Activated T-helper 1 cell treated with anti-CD3 and anti-CD28 coated beads, Interleukin-12 subunit alpha, Interleukin-12 subunit beta, Interleukin-2, Interleukin-4 antibody, amounts not matched to agents 30 ng/mL and 10 ng/mL and 1 ng/mL, durations not matched to agents 14 hours and 24 hours and 36 hours (primary cell): ENCODE measurements at regions of chr19 and their contacts with region 1.

Region 1: DNA sequence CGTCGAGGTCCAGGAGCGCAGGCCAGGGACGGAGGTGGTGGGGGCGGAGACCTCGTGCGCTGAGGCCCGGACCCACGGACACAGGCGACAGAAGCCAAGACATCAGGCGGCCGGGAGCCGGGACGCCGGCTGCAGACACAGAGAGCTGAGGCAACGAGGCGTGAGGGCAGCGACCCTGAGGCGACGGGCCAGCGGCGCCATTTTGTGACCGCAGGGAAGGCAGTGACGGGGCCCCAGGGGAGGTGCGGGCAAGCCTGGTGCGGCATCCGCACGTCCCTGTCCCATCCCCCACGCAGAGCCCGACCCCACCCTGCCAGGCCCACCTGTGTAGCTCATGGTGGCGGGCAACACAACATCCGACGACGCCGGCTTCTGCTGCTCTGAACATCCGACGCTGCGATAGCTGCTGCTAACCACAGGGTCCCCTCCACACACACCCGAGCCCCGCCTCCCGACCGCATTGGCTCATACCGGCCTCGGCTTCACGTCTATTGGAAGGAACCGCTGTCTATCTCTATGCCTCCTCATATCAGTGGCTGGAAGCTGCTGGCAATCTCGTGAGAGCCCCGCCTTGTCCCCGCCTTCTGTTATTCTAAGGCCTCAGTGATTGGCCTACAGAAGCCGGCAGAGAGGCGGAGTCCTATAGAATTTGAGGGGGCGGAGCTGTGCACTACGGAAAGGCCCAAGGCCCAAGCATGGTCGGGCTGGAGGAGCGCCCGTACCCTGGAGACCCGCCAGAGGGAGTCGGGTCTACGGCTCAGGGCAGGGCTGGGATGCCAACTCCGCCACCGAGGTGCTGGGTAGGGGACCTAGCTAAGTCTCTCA is at the start of gene AKAP8L:
- DNase-seq: peak; percentile 98
- H3K4me3 Mint-ChIP-seq: peak within 1 kb of the TSS; percentile 98
- H3K27ac Mint-ChIP-seq: peak within 1 kb of the TSS; percentile 89
- H3K4me1 Mint-ChIP-seq: peaks cover 18% of the 10 kb centered on the region
- H3K27me3 Mint-ChIP-seq: no peaks in the 10 kb centered on the region
- total RNA-seq, gene AKAP8L: 73.8 and 77.9 TPM in 2 replicates

Region 2: DNA sequence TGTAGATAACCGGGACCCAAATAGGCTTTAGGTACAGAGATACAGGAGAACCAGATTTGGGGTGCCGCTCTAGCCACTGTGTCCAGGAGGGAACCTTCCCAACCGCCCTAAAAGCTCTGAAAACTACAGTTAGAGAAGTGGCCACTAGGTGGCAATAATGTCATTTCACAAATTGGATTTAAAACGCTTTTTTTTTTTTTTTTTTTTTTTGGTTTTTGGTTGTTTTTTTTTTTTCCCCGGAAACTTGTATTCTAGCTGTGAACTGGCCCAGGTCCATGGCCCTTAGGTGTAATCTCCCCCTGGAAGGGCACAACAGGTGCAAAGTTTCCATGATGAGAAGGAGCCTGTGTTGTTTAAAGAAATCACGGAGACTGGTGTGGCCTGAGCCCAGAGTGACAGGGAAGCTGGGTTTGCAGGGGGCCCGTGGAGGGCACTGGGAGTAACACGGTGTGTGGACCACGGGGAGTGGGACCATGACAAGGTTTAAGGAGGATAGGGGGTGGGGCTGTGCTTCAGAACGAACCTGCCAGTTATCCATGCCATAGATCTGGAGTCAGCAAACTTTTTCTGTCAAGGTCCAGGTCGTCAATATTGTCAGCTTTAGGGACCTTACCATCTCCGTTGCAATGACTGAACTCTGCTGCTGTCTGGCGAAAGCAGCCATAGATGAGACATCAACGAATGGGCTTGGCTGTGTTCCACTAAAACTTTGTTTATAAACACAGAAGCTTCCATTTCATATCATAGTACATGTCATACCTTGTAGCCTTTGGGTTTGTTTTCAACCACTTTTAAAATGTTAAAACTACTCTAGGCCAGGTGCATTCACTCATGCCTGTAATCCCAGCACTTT is 326.7 kb before region 1 on chr19:
- intact Hi-C with region 1: loop called (anchors 1 kb)
- DNase-seq: peak; percentile 49
- H3K4me3 Mint-ChIP-seq: no peak overlapping the region
- H3K27ac Mint-ChIP-seq: no peak overlapping the region
- H3K4me1 Mint-ChIP-seq: peaks cover 5% of the 10 kb centered on the region
- H3K27me3 Mint-ChIP-seq: peaks cover 8% of the 10 kb centered on the region

Region 3: DNA sequence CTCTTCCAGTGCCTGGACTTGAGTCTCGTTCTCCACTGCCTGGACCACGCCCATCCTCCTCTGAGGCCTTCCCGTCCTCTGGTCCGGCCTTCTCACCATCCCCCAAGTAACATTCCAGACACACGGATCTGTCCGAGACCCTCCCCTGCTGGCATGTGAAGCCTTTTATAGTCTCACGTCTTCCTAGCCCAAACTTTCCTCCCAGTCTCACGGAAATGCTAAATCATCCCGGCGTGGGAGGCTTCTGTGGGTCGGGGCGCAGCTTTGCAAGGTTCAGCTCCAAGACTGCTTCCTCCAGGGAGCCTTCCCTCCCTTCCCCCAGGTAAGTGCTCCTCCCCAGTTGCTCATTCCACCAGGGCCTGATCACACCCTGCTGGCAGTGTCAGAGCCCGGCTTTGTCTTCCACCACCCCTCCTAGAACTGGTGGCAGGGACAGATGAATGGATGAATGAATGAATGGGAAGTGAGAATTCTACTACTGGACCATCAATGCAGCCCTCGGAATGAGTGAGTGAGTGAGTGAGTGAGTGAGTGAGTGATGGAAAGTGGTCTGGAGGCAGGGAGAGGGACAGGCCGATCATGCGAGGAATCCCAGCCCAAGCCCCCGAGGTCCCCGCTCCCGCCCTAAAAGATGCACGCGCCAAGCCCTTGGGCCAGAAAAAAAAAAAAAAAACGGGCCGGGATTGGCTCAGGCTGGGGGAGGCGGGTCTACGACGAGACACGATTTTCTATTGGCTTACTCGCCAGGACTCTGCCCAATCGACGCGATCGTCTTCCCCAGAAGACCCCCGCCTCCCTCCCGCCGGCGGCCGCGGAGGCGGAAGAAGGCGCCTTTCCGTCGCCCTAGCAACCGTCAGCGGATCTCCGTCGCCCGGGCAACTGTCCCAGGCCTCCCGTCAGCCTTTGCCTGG is 195.8 kb before region 1 on chr19:
- intact Hi-C with region 1: loop called (anchors 1 kb)
- DNase-seq: peak; percentile 78
- H3K4me3 Mint-ChIP-seq: peak overlapping the region; percentile 83
- H3K27ac Mint-ChIP-seq: no peak overlapping the region
- H3K4me1 Mint-ChIP-seq: peaks cover 6% of the 10 kb centered on the region
- H3K27me3 Mint-ChIP-seq: peaks cover 25% of the 10 kb centered on the region

Region 4: GRCh38 chr19:15432629-15433518 is 14.1 kb after region 1 on chr19:
- intact Hi-C with region 1: loop called (anchors 1 kb)
- DNase-seq: peak; percentile 94
- H3K4me3 Mint-ChIP-seq: peak overlapping the region; percentile 91
- H3K27ac Mint-ChIP-seq: peak overlapping the region; percentile 88
- H3K4me1 Mint-ChIP-seq: peaks cover 31% of the 10 kb centered on the region
- H3K27me3 Mint-ChIP-seq: no peaks in the 10 kb centered on the region